Cardiac septum (tissue), 1 donor: ENCODE measurements at regions of chr2 and their contacts with region 1.

Region 1: GRCh38 chr2:43484323-43484930 is 111.4 kb downstream of the THADA start:
- DNase-seq: no peak

Region 2: DNA sequence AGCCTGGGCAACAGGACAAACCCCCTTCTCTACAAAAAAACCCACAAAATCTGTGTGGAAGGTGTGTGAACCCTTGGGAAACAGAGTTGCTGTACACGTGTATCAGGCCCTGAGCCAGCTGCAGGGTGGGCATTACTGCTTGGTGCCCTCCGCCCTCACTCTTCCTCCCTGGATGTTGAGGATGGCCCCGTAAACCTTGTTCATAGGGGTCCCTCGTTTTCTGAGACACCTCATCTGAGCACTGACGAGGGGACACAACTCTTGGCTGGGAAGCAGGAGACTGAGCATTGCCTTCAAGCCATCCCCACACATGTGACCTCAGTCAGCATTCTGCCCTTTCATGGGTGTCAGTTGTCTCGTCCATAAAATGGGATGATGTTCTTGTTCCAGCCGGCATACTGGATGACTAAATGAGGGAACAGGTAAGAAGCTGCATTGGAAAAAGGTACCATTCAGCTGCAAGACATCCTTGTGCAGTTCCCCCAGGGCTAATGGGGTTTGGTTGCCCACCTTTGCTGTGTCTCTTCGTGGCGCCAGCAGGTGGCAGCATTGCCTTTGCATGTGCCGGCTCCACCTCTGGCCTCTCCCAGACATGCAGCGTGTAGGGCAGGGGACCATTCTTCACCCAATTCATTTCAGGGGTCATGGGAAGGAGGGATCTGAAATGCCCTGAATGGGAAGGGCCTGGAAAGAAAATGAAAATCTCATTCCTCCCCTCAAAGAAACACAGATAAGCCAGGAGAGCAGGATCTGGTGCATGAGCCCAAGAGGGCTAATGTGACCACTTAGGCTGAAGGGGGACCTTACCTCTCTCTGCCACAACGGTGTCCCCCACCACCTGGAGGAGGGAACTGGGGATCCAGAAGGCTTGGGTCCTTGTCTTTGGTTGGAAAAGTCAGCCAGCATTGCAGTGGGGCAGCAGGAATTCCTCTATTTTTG is 655.7 kb before region 1 on chr2:
- intact Hi-C with region 1: loop called (anchors 2 kb)
- DNase-seq: peak; percentile 89

Region 3: GRCh38 chr2:42944779-42945415 is 539.5 kb before region 1 on chr2:
- intact Hi-C with region 1: loop called (anchors 2 kb)
- DNase-seq: no peak

Region 4: GRCh38 chr2:43024515-43025011 is 459.9 kb before region 1 on chr2:
- intact Hi-C with region 1: loop called (anchors 5 kb)
- DNase-seq: no peak

Region 5: DNA sequence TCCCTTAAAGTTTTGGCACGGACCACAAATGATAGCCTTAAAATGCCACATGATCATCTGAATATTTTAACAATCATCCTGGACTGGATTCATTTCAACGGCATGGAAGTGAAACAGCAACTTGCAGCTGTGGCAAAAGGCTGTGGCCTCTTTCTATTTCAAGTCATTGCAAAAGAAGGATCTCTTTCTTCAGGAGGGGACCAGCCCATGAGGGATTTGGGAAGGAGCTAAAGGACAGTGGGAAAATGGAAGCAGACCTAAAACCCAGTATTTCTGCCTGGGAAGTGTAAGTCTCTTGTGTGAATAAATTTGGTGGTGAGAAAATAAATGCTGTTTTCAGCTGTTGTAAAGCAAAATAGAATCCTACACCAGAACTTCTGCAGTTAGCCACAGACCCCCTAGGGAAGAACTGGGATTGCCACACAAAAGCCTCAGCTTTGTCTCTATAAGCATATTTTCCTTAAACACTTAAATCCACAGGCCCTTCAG is 150.7 kb before region 1 on chr2:
- intact Hi-C with region 1: loop called (anchors 5 kb)
- DNase-seq: no peak